Left ventricle myocardium inferior (tissue), 1 donor: ENCODE measurements at regions of chr11 and their contacts with region 1.

Region 1: DNA sequence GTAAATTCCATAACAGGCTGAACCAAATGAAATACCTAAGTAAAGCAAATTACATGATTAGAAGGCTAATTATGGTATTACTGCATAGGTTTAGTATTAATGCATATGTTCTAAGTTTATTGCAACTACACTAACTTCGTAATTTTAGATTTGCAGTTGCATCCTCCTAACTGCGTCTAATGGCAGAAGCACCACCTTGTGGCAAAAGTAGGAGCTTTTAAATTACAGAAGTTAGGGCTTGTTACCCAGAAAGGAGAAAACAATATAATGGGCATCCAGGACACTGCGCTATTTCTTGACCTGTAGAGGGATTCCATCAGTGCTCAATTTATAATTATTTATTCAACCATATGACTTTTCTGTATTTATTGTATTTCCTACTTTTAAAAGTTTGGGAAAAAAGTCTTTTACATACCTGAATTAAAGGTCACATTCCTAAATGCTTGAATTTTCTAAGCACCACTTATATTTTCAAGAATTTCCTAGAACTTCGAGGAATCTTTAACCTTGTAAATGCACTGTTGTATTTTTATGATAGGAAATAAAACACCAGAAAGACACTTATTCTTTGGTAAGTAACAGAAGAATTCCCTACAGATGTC is 16.3 kb upstream of the GPR83 start:
- DNase-seq: no peak
- H3K4me3 ChIP-seq: no peak overlapping the region
- H3K27ac ChIP-seq: no peak overlapping the region
- H3K4me1 ChIP-seq: no peaks in the 10 kb centered on the region
- H3K27me3 ChIP-seq: no peaks in the 10 kb centered on the region
- CTCF ChIP-seq: peak; percentile 68

Region 2: GRCh38 chr11:93921695-93922468 is 495.6 kb before region 1 on chr11:
- intact Hi-C with region 1: loop called (anchors 10 kb)
- DNase-seq: no peak
- H3K4me3 ChIP-seq: no peak overlapping the region
- H3K27ac ChIP-seq: no peak overlapping the region
- H3K4me1 ChIP-seq: no peaks in the 10 kb centered on the region
- H3K27me3 ChIP-seq: peaks cover 22% of the 10 kb centered on the region
- CTCF ChIP-seq: peak; percentile 69